Adrenal gland (tissue), 19 donors: ENCODE measurements at regions of chr20 and their contacts with region 1.

Region 1: DNA sequence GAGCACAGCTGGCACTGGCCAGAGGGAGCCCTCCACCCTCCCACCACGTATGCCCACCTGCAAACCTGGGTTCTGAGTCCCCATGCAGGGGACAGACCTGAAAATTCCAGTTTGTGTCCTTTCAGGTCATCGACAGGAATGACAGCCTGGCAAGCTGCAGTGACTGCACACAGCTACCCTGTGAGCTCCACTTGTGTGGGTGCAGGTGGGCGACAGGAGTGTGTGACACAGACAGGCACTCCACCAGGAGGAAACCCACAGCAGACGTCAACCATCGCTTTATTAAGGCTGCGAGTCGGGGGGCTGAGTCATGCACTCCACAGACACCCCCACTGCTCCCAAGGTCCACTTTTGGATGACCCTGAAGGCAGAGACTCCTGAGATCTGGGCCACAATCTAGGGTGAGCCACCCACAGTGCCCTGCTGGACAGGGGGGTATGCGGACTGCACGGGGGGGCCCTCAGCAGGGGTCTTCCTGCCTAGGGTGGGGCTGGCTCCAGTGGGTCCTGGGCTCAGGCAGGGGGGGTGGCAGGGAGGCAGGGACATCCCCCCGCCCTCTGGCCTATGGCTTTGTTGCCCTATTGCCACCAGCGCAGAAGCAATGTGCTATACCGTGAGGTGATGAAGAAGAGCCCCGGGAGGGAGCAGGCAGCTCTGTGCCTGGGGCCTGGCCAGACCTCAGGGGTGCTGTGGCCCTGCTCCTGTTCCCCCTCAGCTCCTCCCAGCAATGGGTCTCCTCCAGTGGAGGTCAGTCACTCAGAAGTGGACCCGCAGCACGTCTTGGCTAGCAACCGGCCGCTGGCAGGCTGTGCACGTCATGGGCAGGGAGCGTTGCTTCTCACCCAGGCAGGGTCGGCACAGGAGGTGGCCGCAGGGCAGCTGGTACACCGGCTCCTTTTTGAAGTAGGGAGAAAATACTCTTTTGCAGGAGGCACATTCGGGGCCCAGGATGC is 25.1 kb upstream of the AVP start:
- DNase-seq: peak in 1 of 7 donors; percentile 42
- H3K4me3 ChIP-seq: no peak overlapping the region
- H3K27ac ChIP-seq: no peak overlapping the region
- H3K4me1 ChIP-seq: peaks cover 0 to 5% of the 10 kb centered on the region in 2 donors
- H3K27me3 ChIP-seq: no peaks in the 10 kb centered on the region
- CTCF ChIP-seq: no peak
- POLR2A ChIP-seq: no peak

Region 2: GRCh38 chr20:3059489-3059888 is 50.1 kb before region 1 on chr20:
- intact Hi-C with region 1: loop called (anchors 5 to 10 kb)
- DNase-seq: peak in 1 of 7 donors; percentile 5
- H3K4me3 ChIP-seq: no peak overlapping the region
- H3K27ac ChIP-seq: no peak overlapping the region
- H3K4me1 ChIP-seq: no peaks in the 10 kb centered on the region
- H3K27me3 ChIP-seq: no peaks in the 10 kb centered on the region
- CTCF ChIP-seq: no peak
- POLR2A ChIP-seq: no peak